Heart left ventricle (tissue), 16 donors: ENCODE measurements at regions of chr21 and their contacts with region 1.

Region 1: GRCh38 chr21:38913120-38913892 is 107.6 kb downstream of the ETS2 start:
- DNase-seq: peak; percentile 65 to 80 (median 73)
- ATAC-seq: peak; percentile 57 to 80 (median 72)
- H3K4me3 ChIP-seq: peak overlapping the region in 7 of 12 donors; percentile 15 to 34 (median 31)
- H3K27ac ChIP-seq: peak overlapping the region; percentile 48 to 87 (median 70)
- H3K4me1 ChIP-seq: peaks cover 0 to 65% (median 34%) of the 10 kb centered on the region in 12 donors
- H3K27me3 ChIP-seq: no peaks in the 10 kb centered on the region
- CTCF ChIP-seq: no peak
- POLR2A ChIP-seq: no peak

Region 2: GRCh38 chr21:38733973-38734546 is 179.2 kb before region 1 on chr21:
- intact Hi-C with region 1: loop called in 2 of 10 experiments (anchors 10 kb)
- DNase-seq: peak; percentile 83 to 94 (median 87)
- ATAC-seq: peak; percentile 78 to 94 (median 93)
- H3K4me3 ChIP-seq: peak overlapping the region in 9 of 12 donors; percentile 9 to 50 (median 38)
- H3K27ac ChIP-seq: peak overlapping the region in 11 of 12 donors; percentile 19 to 85 (median 65)
- H3K4me1 ChIP-seq: peaks cover 0 to 25% (median 8%) of the 10 kb centered on the region in 12 donors
- H3K27me3 ChIP-seq: no peaks in the 10 kb centered on the region
- CTCF ChIP-seq: peak; percentile 86 to 96 (median 92)
- POLR2A ChIP-seq: peak in 1 of 2 donors; percentile 17

Region 3: DNA sequence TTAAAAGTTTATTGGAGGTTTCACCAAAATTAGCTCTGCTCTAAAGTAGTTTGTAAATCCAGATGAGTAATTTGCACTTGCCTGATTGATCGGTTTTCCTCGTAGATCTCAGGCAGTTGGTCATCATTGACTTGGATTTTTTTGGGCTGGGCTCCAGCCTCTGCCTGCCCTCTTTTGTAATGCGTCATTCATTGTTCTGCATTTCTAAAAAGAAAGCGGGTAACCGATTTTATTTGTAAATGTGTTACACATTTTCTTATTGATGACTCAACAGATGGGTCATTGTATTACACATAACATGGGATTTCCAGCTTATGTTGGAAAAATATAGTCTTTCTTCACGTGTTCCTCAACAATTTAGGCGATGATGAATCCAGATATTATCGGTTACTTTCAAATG is 102.0 kb before region 1 on chr21:
- intact Hi-C with region 1: loop called in 9 of 10 experiments (anchors 2 to 5 kb)
- DNase-seq: no peak
- ATAC-seq: no peak
- H3K4me3 ChIP-seq: peak overlapping the region in 4 of 12 donors; percentile 90 to 97 (median 95)
- H3K27ac ChIP-seq: peak overlapping the region in 11 of 12 donors; percentile 17 to 99 (median 96)
- H3K4me1 ChIP-seq: peaks cover 0 to 70% (median 34%) of the 10 kb centered on the region in 12 donors
- H3K27me3 ChIP-seq: no peaks in the 10 kb centered on the region
- CTCF ChIP-seq: no peak
- POLR2A ChIP-seq: no peak

Region 4: DNA sequence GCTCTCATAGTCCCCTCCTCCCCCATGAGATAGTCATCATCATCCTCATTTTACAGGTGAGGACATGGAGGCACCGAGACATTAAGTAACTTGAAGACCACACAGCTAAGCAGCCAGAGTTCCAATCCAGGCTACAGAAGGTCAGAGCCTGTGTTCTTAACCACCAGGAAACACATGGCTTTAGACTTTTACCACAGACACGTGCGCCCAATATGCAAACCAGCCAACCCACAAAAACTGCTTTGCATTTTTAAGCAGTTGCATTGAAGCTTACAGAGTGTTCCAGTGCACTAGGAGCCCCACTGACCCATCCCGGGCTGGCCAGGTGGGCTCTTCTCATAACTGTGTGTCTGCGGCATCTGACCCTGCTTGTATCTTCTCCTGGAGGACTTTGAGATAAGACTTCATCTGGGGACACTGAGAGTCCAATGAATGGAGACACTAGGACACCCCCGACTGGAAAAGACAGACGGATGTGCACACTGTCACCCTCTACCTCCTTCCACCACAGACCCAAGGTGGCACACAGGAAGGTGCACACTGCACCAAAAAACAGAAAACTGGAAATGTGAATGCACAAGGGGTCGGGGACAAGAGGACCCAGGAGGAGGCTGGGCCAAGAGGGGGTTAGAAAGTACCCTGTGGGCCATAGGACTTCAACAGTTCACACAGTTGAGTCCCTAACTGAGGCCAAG is 51.2 kb before region 1 on chr21:
- intact Hi-C with region 1: loop called in 1 of 10 experiments (anchors 5 kb)
- DNase-seq: no peak
- ATAC-seq: no peak
- H3K4me3 ChIP-seq: no peak overlapping the region
- H3K27ac ChIP-seq: no peak overlapping the region
- H3K4me1 ChIP-seq: peaks cover 0 to 25% (median 14%) of the 10 kb centered on the region in 12 donors
- H3K27me3 ChIP-seq: no peaks in the 10 kb centered on the region
- CTCF ChIP-seq: no peak
- POLR2A ChIP-seq: no peak

Region 5: DNA sequence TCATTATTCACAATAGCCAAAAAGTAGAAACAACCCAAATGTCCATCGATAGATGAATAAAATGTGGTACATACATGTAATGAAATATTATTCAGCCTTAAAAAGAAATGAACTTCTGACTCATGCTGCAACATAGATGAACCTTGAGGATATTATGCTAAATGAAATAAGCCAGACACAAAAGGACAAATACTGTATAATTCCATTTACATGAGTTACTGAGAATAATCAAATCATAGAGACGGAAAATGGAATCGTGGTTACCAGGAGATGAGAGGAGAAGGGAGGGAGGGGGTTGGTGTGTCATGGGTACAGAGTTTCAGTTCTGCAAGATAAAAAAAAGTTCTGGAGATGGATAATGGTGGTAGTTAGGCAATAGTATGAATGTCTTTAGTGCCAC is 85.9 kb after region 1 on chr21:
- intact Hi-C with region 1: loop called in 7 of 10 experiments (anchors 5 to 10 kb)
- DNase-seq: no peak
- ATAC-seq: no peak
- H3K4me3 ChIP-seq: no peak overlapping the region
- H3K27ac ChIP-seq: peak overlapping the region in 2 of 12 donors; percentile 44 to 72
- H3K4me1 ChIP-seq: peaks cover 0 to 83% (median 60%) of the 10 kb centered on the region in 12 donors
- H3K27me3 ChIP-seq: no peaks in the 10 kb centered on the region
- CTCF ChIP-seq: no peak
- POLR2A ChIP-seq: no peak

Region 6: GRCh38 chr21:39062196-39062595 is 148.9 kb after region 1 on chr21:
- intact Hi-C with region 1: loop called in 1 of 10 experiments (anchors 5 kb)
- DNase-seq: peak in 1 of 5 donors; percentile 44
- ATAC-seq: peak in 1 of 4 donors; percentile 17
- H3K4me3 ChIP-seq: no peak overlapping the region
- H3K27ac ChIP-seq: no peak overlapping the region
- H3K4me1 ChIP-seq: peaks cover 0 to 20% (median 13%) of the 10 kb centered on the region in 12 donors
- H3K27me3 ChIP-seq: no peaks in the 10 kb centered on the region
- CTCF ChIP-seq: no peak
- POLR2A ChIP-seq: no peak

Region 7: GRCh38 chr21:39515684-39516472 is 602.6 kb after region 1 on chr21:
- intact Hi-C with region 1: no loop called
- DNase-seq: no peak
- ATAC-seq: no peak
- H3K4me3 ChIP-seq: no peak overlapping the region
- H3K27ac ChIP-seq: no peak overlapping the region
- H3K4me1 ChIP-seq: peaks cover 0 to 14% (median 0%) of the 10 kb centered on the region in 12 donors
- H3K27me3 ChIP-seq: no peaks in the 10 kb centered on the region
- CTCF ChIP-seq: no peak
- POLR2A ChIP-seq: no peak